Panc1 (cell line): ENCODE measurements at regions of chr11 and their contacts with region 1.

Region 1: DNA sequence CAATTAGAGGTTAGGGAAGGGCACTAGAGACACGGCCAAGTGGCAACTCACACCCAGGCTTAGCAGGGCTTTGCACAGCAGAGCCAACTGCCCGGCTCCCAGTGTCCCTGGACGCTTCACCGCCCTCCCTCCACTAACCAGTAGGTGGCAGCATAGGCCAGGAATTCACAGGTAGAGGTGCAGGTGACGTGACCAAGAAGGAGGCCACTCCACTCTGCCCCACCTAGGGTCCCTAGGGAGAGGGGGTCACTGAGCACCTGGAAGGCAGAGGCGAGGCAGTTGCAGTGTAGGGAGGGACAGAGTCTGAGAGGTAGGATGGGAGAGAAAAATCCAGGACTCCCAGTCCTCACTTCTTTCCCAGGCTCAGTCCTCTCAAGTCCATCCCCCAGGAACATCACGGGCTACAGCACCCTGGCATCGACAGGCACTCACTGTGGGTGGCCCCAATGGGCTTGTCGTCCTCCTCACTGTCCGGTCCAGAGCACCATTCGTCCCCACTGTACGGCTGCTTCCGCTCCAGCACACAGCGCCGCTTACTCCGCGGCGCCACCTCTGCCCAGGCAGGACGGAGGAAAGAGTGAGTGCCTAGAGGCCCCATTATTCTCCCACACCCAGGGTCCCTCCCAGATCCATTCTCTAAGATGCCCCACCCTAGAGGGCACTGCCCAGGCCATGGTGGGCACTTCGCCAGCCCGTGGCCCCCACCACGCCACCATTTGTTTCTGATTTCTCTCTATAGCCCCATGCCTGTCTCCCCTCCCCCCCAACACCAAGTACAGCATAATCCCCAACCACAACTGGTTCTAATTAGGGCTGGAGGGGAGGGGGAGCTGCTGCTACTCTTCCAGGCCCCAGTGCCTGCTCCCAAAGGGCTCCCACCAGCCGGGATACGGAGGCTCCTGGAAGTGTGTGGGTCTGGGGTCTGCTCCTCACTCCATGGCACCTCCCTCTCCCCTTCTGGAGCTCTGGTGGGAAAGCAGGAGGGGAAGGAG is 18.4 kb downstream of the BCL9L start:
- DNase-seq: peak; percentile 86
- ATAC-seq: peak; percentile 53
- H3K4me3 ChIP-seq: peak overlapping the region; percentile 11 to 37
- H3K27ac ChIP-seq: peak overlapping the region; percentile 99
- H3K4me1 ChIP-seq: peaks cover 76% of the 10 kb centered on the region
- H3K27me3 ChIP-seq: no peaks in the 10 kb centered on the region
- CTCF ChIP-seq: peak; percentile 92

Region 2: GRCh38 chr11:117970400-117971024 is 936.8 kb before region 1 on chr11:
- CTCF ChIA-PET with region 1: interaction called, 14 read pairs
- POLR2A ChIA-PET with region 1: no interaction called
- in situ Hi-C with region 1: no loop called
- intact Hi-C with region 1: no loop called
- DNase-seq: no peak
- ATAC-seq: peak; percentile 53; the same call in 1 of the 2 replicates
- H3K4me3 ChIP-seq: no peak overlapping the region
- H3K27ac ChIP-seq: no peak overlapping the region
- H3K4me1 ChIP-seq: peaks cover 8% of the 10 kb centered on the region; the same call in 1 of the 2 replicates
- H3K27me3 ChIP-seq: peaks cover 2% of the 10 kb centered on the region; the same call in 1 of the 2 replicates
- CTCF ChIP-seq: no peak

Region 3: GRCh38 chr11:118921929-118922744 is 14.8 kb after region 1 on chr11:
- CTCF ChIA-PET with region 1: interaction called, 7 read pairs
- POLR2A ChIA-PET with region 1: interaction called, 22 read pairs
- in situ Hi-C with region 1: no loop called
- intact Hi-C with region 1: no loop called
- DNase-seq: no peak
- ATAC-seq: peak; percentile 20
- H3K4me3 ChIP-seq: peak overlapping the region; percentile 81 to 99
- H3K27ac ChIP-seq: peak overlapping the region; percentile 97
- H3K4me1 ChIP-seq: peaks cover 50% of the 10 kb centered on the region
- H3K27me3 ChIP-seq: no peaks in the 10 kb centered on the region
- CTCF ChIP-seq: no peak

Region 4: DNA sequence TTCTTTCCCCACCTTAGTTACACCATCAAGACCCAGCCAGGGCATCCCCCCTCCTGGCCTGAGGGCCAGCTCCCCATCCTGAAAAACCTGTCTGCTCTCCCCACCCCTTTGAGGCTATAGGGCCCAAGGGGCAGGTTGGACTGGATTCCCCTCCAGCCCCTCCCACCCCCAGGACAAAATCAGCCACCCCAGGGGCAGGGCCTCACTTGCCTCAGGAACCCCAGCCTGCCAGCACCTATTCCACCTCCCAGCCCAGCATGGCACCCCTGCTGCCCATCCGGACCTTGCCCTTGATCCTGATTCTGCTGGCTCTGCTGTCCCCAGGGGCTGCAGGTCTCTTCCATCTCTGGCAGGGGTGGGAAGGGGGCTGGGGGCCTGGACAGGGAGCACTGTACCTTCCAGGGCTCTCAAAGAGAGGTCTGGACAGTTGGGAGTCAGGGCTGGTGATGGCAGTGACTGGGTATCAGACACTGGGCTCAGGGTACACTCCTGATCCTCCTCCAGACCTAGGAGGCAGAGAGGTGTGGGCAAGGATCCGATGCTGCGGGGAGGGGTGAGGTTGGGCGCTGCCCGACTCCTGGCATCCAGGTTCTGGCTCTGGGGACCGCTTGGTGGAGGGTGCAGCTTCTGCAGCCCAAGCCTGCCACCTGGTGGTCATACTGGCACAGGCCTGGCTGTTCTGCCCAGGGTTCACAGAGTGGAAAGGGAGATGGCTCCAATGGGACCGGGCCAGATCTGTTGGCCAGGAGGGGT is 48.9 kb after region 1 on chr11 and contains the start of gene UPK2:
- CTCF ChIA-PET with region 1: interaction called, 17 read pairs
- POLR2A ChIA-PET with region 1: no interaction called
- in situ Hi-C with region 1: no loop called
- intact Hi-C with region 1: loop called (anchors 2 kb)
- DNase-seq: peak; percentile 72
- ATAC-seq: peak; percentile 99
- H3K4me3 ChIP-seq: no peak within 1 kb of the TSS
- H3K27ac ChIP-seq: no peak within 1 kb of the TSS
- H3K4me1 ChIP-seq: no peaks in the 10 kb centered on the region
- H3K27me3 ChIP-seq: no peaks in the 10 kb centered on the region
- CTCF ChIP-seq: peak; percentile 96
- total RNA-seq, gene UPK2: 0.92 TPM